Cardiac septum (tissue), 1 donor: ENCODE measurements at regions of chr2 and their contacts with region 1.

Region 1: GRCh38 chr2:38233231-38233983 is 143.7 kb downstream of the ATL2 start:
- DNase-seq: no peak

Region 2: DNA sequence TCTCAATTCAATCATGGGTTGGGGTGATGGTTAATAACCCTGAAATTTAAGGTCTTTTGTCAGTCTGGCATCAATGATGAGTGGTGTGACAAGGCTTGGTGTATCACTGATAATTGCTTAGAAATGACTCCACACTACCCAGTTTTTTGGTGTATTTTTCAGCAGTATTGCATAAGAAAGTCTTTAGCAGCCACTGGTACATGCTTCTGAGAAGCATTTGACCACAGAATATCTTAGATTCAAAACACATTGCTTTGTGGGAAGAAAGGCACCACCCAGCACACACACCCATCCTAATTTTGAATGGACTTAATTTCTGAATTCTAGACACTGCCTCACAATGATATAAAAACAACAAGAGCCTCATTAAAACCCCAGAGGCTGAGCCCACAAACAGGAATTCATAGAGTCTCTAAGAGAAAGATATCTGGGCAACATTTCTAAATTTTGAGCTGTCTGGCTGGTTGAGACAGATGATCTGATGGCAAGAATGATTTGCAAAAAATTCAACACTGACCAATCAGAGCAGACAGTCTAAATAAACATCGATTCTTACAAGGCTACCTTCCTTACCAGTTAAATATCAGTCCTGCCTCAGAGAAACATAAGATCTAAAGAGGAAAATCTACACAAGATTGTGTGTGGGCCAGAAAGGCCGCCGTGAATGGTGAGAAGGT is 42.7 kb before region 1 on chr2:
- intact Hi-C with region 1: loop called (anchors 5 kb)
- DNase-seq: no peak